CD8-positive, alpha-beta T cell (primary cell): ENCODE measurements at regions of chr9 and their contacts with region 1.

Region 1: GRCh38 chr9:35603987-35604577 is 980 bp upstream of the TESK1 start:
- DNase-seq: peak; percentile 98 to 100 (median 99)
- ATAC-seq: peak; percentile 91
- H3K4me3 ChIP-seq: peak overlapping the region; percentile 61 to 83
- H3K4me3 Mint-ChIP-seq: peak overlapping the region; percentile 93
- H3K27ac ChIP-seq: peak overlapping the region; percentile 61 to 83
- H3K27ac Mint-ChIP-seq: peak overlapping the region; percentile 93
- H3K4me1 ChIP-seq: peaks cover 23% of the 10 kb centered on the region
- H3K4me1 Mint-ChIP-seq: peaks cover 31% of the 10 kb centered on the region
- H3K27me3 ChIP-seq: no peaks in the 10 kb centered on the region
- H3K27me3 Mint-ChIP-seq: no peaks in the 10 kb centered on the region
- CTCF ChIP-seq: peak; percentile 92

Region 2: GRCh38 chr9:34376596-34377403 is 1227.3 kb before region 1 on chr9 and contains the start of gene MYORG:
- CTCF ChIA-PET with region 1: no interaction called
- POLR2A ChIA-PET with region 1: no interaction called
- intact Hi-C with region 1: loop called in 1 of 2 experiments (anchors 2 kb)
- DNase-seq: peak; percentile 93 to 98 (median 95)
- ATAC-seq: peak; percentile 73
- H3K4me3 ChIP-seq: peak within 1 kb of the TSS; percentile 77 to 82
- H3K4me3 Mint-ChIP-seq: peak within 1 kb of the TSS; percentile 93
- H3K27ac ChIP-seq: peak within 1 kb of the TSS; percentile 9 to 55
- H3K27ac Mint-ChIP-seq: peak within 1 kb of the TSS; percentile 89
- H3K4me1 ChIP-seq: peaks cover 36% of the 10 kb centered on the region
- H3K4me1 Mint-ChIP-seq: peaks cover 47% of the 10 kb centered on the region
- H3K27me3 ChIP-seq: no peaks in the 10 kb centered on the region
- H3K27me3 Mint-ChIP-seq: no peaks in the 10 kb centered on the region
- CTCF ChIP-seq: no peak
- total RNA-seq, gene MYORG: 0.39 to 0.60 TPM

Region 3: GRCh38 chr9:34989003-34989945 is 614.8 kb before region 1 on chr9 and contains the start of gene DNAJB5:
- CTCF ChIA-PET with region 1: no interaction called
- POLR2A ChIA-PET with region 1: no interaction called
- intact Hi-C with region 1: loop called in 1 of 2 experiments (anchors 1 kb)
- DNase-seq: peak; percentile 94 to 99 (median 96)
- ATAC-seq: peak; percentile 89
- H3K4me3 ChIP-seq: peak within 1 kb of the TSS; percentile 88 to 95
- H3K4me3 Mint-ChIP-seq: peak within 1 kb of the TSS; percentile 93
- H3K27ac ChIP-seq: peak within 1 kb of the TSS; percentile 42 to 77
- H3K27ac Mint-ChIP-seq: peak within 1 kb of the TSS; percentile 76
- H3K4me1 ChIP-seq: peaks cover 42% of the 10 kb centered on the region
- H3K4me1 Mint-ChIP-seq: peaks cover 46% of the 10 kb centered on the region
- H3K27me3 ChIP-seq: no peaks in the 10 kb centered on the region
- H3K27me3 Mint-ChIP-seq: no peaks in the 10 kb centered on the region
- CTCF ChIP-seq: no peak
- total RNA-seq, gene DNAJB5: 2.1 to 2.2 TPM

Region 4: GRCh38 chr9:35322075-35322885 is 281.8 kb before region 1 on chr9:
- CTCF ChIA-PET with region 1: no interaction called
- POLR2A ChIA-PET with region 1: no interaction called
- intact Hi-C with region 1: no loop called
- DNase-seq: no peak
- ATAC-seq: no peak
- H3K4me3 ChIP-seq: no peak overlapping the region
- H3K4me3 Mint-ChIP-seq: no peak overlapping the region
- H3K27ac ChIP-seq: no peak overlapping the region
- H3K27ac Mint-ChIP-seq: no peak overlapping the region
- H3K4me1 ChIP-seq: no peaks in the 10 kb centered on the region
- H3K4me1 Mint-ChIP-seq: no peaks in the 10 kb centered on the region
- H3K27me3 ChIP-seq: no peaks in the 10 kb centered on the region
- H3K27me3 Mint-ChIP-seq: peaks cover 2% of the 10 kb centered on the region
- CTCF ChIP-seq: no peak

Region 5: DNA sequence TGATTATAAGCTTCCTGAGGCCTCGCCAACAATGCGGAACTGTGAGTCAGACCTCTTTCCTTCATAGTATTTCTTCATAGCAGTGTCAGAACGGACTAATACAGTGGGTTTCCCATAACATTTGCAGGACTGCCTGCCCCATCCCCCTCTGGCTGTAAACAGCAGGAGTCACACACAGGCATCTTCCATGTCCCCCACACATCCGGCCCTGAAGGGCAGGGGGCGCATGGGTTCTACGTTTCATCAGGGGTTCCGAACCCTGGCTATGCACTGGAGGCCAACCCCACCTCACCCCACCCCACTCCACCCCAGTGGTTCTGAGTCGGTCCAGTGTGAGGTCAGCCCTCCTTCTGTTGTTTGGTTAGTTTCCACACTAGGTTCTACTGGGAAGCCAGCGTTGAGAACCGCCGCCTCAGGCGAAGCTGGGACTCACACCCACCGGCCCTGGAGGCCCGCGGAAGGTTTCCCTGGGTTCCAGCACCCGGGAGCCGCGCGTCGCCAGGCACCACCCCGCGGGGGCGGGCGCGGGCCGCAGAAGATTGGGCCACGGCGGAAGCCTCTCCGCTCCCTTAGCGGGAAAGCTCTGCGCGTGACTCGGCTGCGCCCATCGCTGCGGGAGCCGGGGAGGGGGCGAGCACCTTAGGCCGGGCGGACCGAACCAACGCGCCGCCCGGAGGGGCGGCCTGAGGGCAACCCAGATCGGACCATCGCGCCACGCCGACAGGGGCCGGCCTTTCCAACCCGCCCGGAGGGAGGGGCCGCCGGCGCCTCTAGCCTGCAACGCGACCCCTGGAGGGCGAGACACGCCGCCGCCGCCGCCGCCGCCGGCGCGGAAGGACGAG is 114.5 kb before region 1 on chr9 and contains the start of gene RUSC2:
- CTCF ChIA-PET with region 1: interaction called, 3 read pairs
- POLR2A ChIA-PET with region 1: no interaction called
- intact Hi-C with region 1: loop called in 1 of 2 experiments (anchors 1 kb)
- DNase-seq: peak in 8 of 9 experiments; percentile 8 to 70 (median 38)
- ATAC-seq: peak; percentile 65
- H3K4me3 ChIP-seq: peak within 1 kb of the TSS; percentile 39 to 55
- H3K4me3 Mint-ChIP-seq: peak within 1 kb of the TSS; percentile 81
- H3K27ac ChIP-seq: no peak within 1 kb of the TSS
- H3K27ac Mint-ChIP-seq: peak within 1 kb of the TSS; percentile 35
- H3K4me1 ChIP-seq: peaks cover 9% of the 10 kb centered on the region
- H3K4me1 Mint-ChIP-seq: peaks cover 19% of the 10 kb centered on the region
- H3K27me3 ChIP-seq: peaks cover 0 to 8% of the 10 kb centered on the region in 2 experiments
- H3K27me3 Mint-ChIP-seq: peaks cover 15% of the 10 kb centered on the region
- CTCF ChIP-seq: no peak
- total RNA-seq, gene RUSC2: 0.22 to 0.36 TPM

Region 6: GRCh38 chr9:35657546-35658136 is 53.6 kb after region 1 on chr9 and contains the start of gene RMRP:
- CTCF ChIA-PET with region 1: interaction called, 34 read pairs
- POLR2A ChIA-PET with region 1: interaction called, 7 read pairs
- intact Hi-C with region 1: loop called (anchors 1 kb)
- DNase-seq: peak; percentile 58 to 98 (median 83)
- ATAC-seq: peak; percentile 72
- H3K4me3 ChIP-seq: peak within 1 kb of the TSS; percentile 91 to 94
- H3K4me3 Mint-ChIP-seq: peak within 1 kb of the TSS; percentile 93
- H3K27ac ChIP-seq: peak within 1 kb of the TSS; percentile 99 to 100
- H3K27ac Mint-ChIP-seq: peak within 1 kb of the TSS; percentile 98
- H3K4me1 ChIP-seq: peaks cover 45% of the 10 kb centered on the region
- H3K4me1 Mint-ChIP-seq: peaks cover 69% of the 10 kb centered on the region
- H3K27me3 ChIP-seq: peaks cover 0 to 3% of the 10 kb centered on the region in 2 experiments
- H3K27me3 Mint-ChIP-seq: peaks cover 2% of the 10 kb centered on the region
- CTCF ChIP-seq: no peak
- total RNA-seq, gene RMRP: 22,073 to 26,359 TPM

Region 7: DNA sequence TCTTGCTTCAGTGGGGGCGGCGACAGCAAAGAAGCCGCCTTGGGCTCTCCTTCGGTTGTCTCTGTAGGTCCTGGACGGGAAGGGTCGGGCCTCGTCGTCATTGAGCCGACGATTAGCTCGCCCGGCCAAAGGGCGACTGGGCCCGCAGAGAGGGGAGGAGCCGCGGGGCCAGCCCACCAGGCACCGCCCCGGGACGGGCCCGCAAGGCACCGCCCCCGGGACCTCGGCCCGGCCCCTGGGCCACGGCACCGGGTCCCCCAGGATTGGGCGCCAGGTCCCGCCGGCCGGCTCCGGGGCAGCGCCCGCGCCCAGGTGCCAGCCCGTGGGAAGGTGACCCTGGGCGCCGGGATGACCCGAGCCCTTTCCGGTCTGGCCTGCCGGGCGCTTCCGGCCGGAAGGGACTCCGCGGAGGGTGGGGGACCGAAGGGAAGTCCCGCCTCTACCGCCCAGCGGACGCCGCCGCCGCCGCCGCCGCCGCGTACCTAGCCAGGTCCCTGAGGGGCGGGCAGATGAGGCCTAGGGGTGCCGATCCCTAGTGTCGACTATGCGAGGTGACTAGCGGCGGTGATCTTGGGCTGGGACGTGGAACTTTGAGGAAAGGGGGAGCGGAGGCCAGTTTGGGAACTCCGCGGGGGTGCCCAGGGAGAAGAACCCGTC is 144.9 kb after region 1 on chr9 and contains the starts of genes GBA2 and RGP1:
- CTCF ChIA-PET with region 1: interaction called, 5 read pairs
- POLR2A ChIA-PET with region 1: interaction called, 6 read pairs
- intact Hi-C with region 1: loop called in 1 of 2 experiments (anchors 1 kb)
- DNase-seq: peak in 8 of 9 experiments; percentile 50 to 80 (median 66)
- ATAC-seq: peak; percentile 66
- H3K4me3 ChIP-seq: peak within 1 kb of the TSS; percentile 80 to 91
- H3K4me3 Mint-ChIP-seq: peak within 1 kb of the TSS; percentile 98
- H3K27ac ChIP-seq: peak within 1 kb of the TSS; percentile 68 to 86
- H3K27ac Mint-ChIP-seq: peak within 1 kb of the TSS; percentile 94
- H3K4me1 ChIP-seq: peaks cover 41% of the 10 kb centered on the region
- H3K4me1 Mint-ChIP-seq: peaks cover 50% of the 10 kb centered on the region
- H3K27me3 ChIP-seq: no peaks in the 10 kb centered on the region
- H3K27me3 Mint-ChIP-seq: no peaks in the 10 kb centered on the region
- CTCF ChIP-seq: no peak
- total RNA-seq, gene GBA2: 14.1 to 14.3 TPM
- total RNA-seq, gene RGP1: 9.6 to 10.4 TPM

Region 8: DNA sequence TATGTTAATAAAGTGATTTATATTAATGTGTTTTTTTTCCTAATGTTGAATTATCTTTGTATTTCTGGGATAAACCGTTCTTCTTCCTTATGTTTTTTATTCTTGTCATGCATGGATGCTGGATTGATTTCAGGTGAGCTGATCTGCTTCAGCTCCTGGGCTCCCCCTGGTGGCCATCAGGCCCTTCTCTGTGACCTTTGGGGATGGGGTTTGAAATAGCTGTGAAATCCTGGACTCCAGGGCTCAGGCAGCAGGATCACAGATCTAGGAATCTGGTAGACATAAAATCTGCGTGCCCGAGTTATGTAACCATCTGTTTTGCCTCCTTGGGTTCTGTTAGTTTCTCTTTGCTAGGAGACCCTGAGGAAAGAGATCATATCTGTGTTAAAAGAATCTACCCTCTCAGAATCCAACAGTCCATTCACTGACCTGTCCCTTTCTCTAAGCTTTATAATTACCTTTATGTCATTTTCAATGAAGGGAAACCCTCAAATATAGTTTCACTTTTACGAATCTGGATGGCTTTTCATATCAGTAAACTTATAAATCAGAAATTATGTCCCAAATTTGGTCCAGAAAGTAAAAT is 278.3 kb after region 1 on chr9:
- CTCF ChIA-PET with region 1: interaction called, 3 read pairs
- POLR2A ChIA-PET with region 1: no interaction called
- intact Hi-C with region 1: loop called (anchors 2 to 5 kb)
- DNase-seq: peak; percentile 49 to 88 (median 80)
- ATAC-seq: peak; percentile 88
- H3K4me3 ChIP-seq: no peak overlapping the region
- H3K4me3 Mint-ChIP-seq: no peak overlapping the region
- H3K27ac ChIP-seq: no peak overlapping the region
- H3K27ac Mint-ChIP-seq: no peak overlapping the region
- H3K4me1 ChIP-seq: no peaks in the 10 kb centered on the region
- H3K4me1 Mint-ChIP-seq: no peaks in the 10 kb centered on the region
- H3K27me3 ChIP-seq: no peaks in the 10 kb centered on the region
- H3K27me3 Mint-ChIP-seq: peaks cover 4% of the 10 kb centered on the region
- CTCF ChIP-seq: peak; percentile 96